Activated CD4-positive, alpha-beta T cell treated with anti-CD3 and anti-CD28 coated beads for 36 hours (primary cell): ENCODE measurements at regions of chr1 and their contacts with region 1.

Region 1: DNA sequence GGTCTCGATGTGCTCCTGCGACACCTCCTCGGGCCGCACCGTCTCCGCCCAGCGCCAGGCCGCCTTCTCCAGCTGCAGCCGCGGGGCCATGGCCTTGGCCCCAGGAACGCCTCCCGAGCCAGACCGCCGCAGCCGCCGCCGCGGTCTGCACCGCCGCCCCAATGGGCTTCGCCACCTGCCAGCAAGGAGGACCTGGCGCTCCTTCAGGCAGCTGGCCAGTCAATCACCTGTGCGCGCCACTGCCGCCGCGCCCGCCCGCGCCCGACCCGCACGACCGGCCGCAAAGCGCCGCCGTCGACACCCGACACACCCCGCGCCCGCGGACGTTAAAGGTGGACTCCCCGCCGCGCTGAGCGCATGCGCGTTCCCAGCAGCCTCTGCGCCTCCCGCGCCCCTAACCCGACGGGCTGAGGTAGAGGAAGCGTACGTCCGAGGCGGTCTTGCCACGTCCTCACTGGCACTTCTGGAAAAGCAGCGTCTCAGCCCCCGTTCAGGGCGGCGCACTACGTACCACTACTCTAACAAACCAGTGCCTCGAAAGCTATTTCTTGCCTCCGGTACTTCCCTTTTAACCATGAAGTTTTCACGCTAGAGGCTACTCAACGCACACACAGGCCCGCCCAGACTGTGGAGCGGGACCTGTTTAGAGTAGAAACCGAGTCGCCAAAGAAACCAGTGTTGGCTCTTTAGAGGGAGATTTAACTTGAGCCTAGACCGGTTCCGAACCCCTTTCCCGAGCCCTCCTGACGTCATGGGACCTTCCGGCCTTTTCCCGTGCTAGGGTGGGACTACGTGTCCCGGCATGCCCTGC is at the start of gene USP48:
- DNase-seq: peak; percentile 98
- ATAC-seq: peak; percentile 79
- H3K4me3 Mint-ChIP-seq: peak within 1 kb of the TSS; percentile 87
- H3K27ac Mint-ChIP-seq: peak within 1 kb of the TSS; percentile 100
- H3K4me1 Mint-ChIP-seq: peaks cover 21% of the 10 kb centered on the region
- H3K27me3 Mint-ChIP-seq: no peaks in the 10 kb centered on the region
- total RNA-seq, gene USP48: 66.9 to 81.5 TPM

Region 2: DNA sequence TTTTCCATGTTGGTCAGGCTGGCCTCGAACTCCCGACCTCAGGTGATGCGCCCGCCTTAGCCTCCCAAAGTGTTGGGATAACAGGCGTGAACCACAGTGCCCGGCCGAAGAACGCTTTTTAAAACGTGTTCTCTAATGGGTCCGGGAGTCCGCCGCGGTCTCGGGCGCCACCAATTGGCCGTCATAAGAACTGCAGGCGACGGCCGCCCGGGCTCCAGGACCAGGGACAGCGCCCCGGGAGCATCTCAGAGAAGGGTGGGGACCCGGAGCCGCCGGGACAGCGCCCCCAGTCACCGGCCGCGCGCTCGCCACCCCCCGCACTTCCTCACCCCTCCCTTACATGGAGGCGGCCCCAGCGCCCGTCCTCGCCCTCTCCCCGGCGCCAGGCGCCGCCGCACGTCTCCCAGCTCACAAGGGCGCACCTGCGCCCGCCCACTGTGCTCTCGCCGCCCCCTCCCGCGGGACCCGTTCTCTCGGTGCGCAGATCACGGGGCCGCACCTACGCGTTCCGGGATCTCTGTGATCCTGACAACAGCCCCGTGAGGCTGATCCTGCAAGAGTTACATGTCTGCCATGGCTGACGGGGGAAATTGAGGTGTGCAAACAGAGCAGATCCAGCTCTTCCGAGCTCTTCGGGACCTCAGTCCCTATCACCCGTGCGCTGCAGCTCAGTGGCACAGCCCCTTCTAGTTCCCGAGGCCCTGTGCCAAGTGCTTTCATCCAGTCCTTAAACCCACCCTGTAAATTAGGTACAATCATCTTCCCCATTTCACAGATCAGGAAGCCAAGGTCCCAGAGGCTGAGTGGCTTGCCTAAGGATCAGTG is 123.8 kb before region 1 on chr1:
- CTCF ChIA-PET with region 1: no interaction called
- POLR2A ChIA-PET with region 1: no interaction called
- intact Hi-C with region 1: loop called in 1 of 2 experiments (anchors 1 kb)
- DNase-seq: peak; percentile 90
- ATAC-seq: peak; percentile 94
- H3K4me3 Mint-ChIP-seq: peak overlapping the region; percentile 56
- H3K27ac Mint-ChIP-seq: no peak overlapping the region
- H3K4me1 Mint-ChIP-seq: peaks cover 6% of the 10 kb centered on the region
- H3K27me3 Mint-ChIP-seq: peaks cover 22% of the 10 kb centered on the region

Region 3: GRCh38 chr1:21766210-21766609 is 16.9 kb before region 1 on chr1:
- CTCF ChIA-PET with region 1: interaction called, 5 read pairs
- POLR2A ChIA-PET with region 1: interaction called, 3 read pairs
- intact Hi-C with region 1: loop called (anchors 1 kb)
- DNase-seq: peak; percentile 21
- ATAC-seq: peak; percentile 87
- H3K4me3 Mint-ChIP-seq: no peak overlapping the region
- H3K27ac Mint-ChIP-seq: peak overlapping the region; percentile 68
- H3K4me1 Mint-ChIP-seq: peaks cover 65% of the 10 kb centered on the region
- H3K27me3 Mint-ChIP-seq: no peaks in the 10 kb centered on the region

Region 4: GRCh38 chr1:21937372-21938221 is 154.5 kb after region 1 on chr1:
- CTCF ChIA-PET with region 1: no interaction called
- POLR2A ChIA-PET with region 1: no interaction called
- intact Hi-C with region 1: loop called in 1 of 2 experiments (anchors 1 kb)
- DNase-seq: peak; percentile 79
- ATAC-seq: peak; percentile 80
- H3K4me3 Mint-ChIP-seq: peak overlapping the region; percentile 74
- H3K27ac Mint-ChIP-seq: peak overlapping the region; percentile 80
- H3K4me1 Mint-ChIP-seq: peaks cover 20% of the 10 kb centered on the region
- H3K27me3 Mint-ChIP-seq: peaks cover 10% of the 10 kb centered on the region

Region 5: DNA sequence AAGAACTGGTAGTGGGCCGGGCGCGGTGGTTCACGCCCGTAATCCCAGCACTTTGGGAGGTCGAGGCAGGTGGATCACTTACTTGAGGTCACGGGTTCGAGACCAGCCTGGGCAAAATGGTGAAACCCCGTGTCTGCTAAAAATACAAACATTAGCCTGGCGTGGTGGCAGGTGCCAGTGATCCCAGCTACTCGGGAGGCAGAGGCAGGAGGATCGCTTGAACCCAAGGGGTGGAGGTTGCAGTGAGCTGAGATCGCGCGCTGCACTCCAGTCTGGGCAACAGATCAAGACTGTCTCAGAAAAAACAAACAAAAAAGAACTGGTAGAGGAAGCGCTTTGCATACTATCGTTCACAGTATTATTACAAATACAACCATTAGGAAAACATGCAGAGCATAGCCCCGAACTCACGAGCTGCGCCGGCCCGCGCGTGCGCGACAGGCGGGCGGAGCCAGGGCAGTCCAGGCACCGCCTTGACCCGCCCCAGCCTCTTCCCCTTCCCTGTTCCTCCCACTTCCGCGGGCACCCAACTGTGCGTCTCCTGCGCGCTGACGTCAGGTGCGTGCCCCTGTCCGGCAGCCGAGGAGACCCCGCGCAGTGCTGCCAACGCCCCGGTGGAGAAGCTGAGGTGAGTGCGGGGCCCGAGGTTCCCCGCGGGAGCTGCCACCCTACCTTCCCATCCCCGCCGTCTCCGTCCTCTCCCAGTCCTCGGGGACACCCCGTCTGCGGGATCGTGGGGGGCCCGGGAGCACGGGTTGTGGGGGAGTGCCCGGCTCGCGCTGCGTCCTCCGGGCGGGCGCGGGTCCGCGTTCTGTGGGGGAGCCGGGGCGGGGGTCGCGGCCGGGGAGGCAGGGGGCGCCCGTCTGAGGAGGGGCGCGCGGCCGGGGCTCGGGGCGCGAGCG is 269.3 kb after region 1 on chr1 and contains the start of gene CDC42:
- CTCF ChIA-PET with region 1: no interaction called
- POLR2A ChIA-PET with region 1: interaction called, 3 read pairs
- intact Hi-C with region 1: loop called in 1 of 2 experiments (anchors 1 kb)
- DNase-seq: peak; percentile 98
- ATAC-seq: peak; percentile 86
- H3K4me3 Mint-ChIP-seq: peak within 1 kb of the TSS; percentile 96
- H3K27ac Mint-ChIP-seq: peak within 1 kb of the TSS; percentile 98
- H3K4me1 Mint-ChIP-seq: peaks cover 56% of the 10 kb centered on the region
- H3K27me3 Mint-ChIP-seq: no peaks in the 10 kb centered on the region
- total RNA-seq, gene CDC42: 298 to 339 TPM

Region 6: DNA sequence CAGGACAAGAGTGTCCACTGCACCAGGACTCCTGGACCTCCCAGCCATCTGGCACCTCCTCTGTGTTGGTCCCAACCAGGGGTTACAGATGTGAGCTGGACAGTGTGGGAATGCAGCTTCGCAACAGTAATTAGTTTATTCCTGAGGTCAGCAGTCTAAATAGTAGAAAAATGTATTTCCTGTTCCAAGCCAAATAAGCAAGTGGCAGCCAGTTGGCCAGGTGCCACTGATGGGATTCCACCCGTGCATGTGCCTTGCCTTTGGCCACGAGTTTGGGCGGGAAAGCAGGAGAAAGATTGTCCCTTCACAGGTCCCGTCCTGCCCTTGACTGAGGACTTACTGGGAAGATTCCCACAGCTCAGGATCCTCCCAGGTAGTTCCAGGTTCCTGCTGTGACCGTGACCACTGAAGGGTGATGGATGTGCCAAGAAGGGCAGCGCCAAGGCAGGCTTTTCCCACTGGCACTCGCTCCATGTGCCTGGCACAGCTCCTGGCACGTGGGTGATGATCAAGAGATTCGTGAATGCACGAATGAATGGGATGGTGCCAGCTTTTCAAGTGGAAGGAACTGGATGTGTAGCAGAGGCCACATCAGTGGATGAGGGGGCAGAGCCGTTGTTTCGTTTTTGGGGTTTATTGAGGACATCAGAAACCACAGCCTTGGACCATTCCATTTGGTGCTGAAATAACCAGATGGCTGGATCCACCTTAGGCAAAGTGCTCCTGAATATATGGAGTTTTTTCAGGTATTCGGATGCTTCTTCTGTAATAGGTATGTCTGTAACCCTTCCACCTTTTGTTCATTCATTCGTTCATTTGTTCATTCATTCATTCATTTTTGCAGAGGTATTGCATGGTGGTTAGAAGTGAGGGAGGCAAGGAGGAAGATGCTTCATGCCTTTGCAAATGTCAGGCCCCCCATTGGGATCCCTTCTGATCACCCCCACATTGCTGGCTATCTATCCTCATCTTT is 422.2 kb after region 1 on chr1:
- CTCF ChIA-PET with region 1: no interaction called
- POLR2A ChIA-PET with region 1: no interaction called
- intact Hi-C with region 1: no loop called
- DNase-seq: no peak
- ATAC-seq: no peak
- H3K4me3 Mint-ChIP-seq: no peak overlapping the region
- H3K27ac Mint-ChIP-seq: no peak overlapping the region
- H3K4me1 Mint-ChIP-seq: no peaks in the 10 kb centered on the region
- H3K27me3 Mint-ChIP-seq: peaks cover 32% of the 10 kb centered on the region

Region 7: GRCh38 chr1:23122023-23122748 is 1339.1 kb after region 1 on chr1:
- CTCF ChIA-PET with region 1: no interaction called
- POLR2A ChIA-PET with region 1: no interaction called
- intact Hi-C with region 1: loop called in 1 of 2 experiments (anchors 10 kb)
- DNase-seq: no peak
- ATAC-seq: no peak
- H3K4me3 Mint-ChIP-seq: no peak overlapping the region
- H3K27ac Mint-ChIP-seq: no peak overlapping the region
- H3K4me1 Mint-ChIP-seq: peaks cover 49% of the 10 kb centered on the region
- H3K27me3 Mint-ChIP-seq: no peaks in the 10 kb centered on the region